ENCODE measurements at regions of chr1 and their contacts with region 1.

Region 1: DNA sequence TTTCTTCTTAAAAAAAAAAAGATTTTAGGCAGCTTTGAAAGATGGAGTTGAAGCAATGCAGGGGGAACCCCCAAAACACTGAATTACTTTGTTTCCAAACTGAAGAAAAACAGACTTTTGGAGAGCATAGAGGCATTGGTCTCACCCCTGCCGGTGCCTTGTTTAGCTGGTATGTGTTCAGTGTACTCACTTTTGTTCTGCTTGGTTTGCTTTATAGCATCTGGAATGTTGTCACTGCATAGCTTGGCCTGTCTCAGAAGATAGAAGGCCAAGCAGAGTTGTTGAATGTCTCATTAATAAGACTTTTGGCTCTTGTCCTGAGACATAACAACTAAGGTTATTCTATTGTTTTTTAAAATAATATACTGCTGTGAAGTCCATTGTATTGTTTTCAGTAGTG is 6.9 kb downstream of the THRAP3 start:
- DNase-seq: no peak
- ATAC-seq: no peak
- H3K4me3 ChIP-seq: peak overlapping the region in 1 of 5 experiments; percentile 42
- H3K4me3 Mint-ChIP-seq: peak overlapping the region; percentile 49
- H3K27ac ChIP-seq: peak overlapping the region; percentile 85 to 94
- H3K27ac Mint-ChIP-seq: peak overlapping the region; percentile 98
- H3K4me1 ChIP-seq: peaks cover 60 to 76% of the 10 kb centered on the region in 2 donors
- H3K4me1 Mint-ChIP-seq: peaks cover 63% of the 10 kb centered on the region
- H3K27me3 ChIP-seq: no peaks in the 10 kb centered on the region
- H3K27me3 Mint-ChIP-seq: no peaks in the 10 kb centered on the region
- CTCF ChIP-seq: no peak

Region 2: GRCh38 chr1:35707601-35708440 is 523.4 kb before region 1 on chr1:
- CTCF ChIA-PET with region 1: no interaction called
- POLR2A ChIA-PET with region 1: no interaction called
- intact Hi-C with region 1: no loop called
- DNase-seq: peak; percentile 30
- ATAC-seq: peak; percentile 33
- H3K4me3 ChIP-seq: peak overlapping the region in 4 of 5 experiments; percentile 13 to 46 (median 36)
- H3K4me3 Mint-ChIP-seq: peak overlapping the region; percentile 78
- H3K27ac ChIP-seq: no peak overlapping the region
- H3K27ac Mint-ChIP-seq: no peak overlapping the region
- H3K4me1 ChIP-seq: peaks cover 13 to 15% of the 10 kb centered on the region in 2 donors
- H3K4me1 Mint-ChIP-seq: peaks cover 20% of the 10 kb centered on the region
- H3K27me3 ChIP-seq: peaks cover 0 to 41% (median 22%) of the 10 kb centered on the region in 4 experiments
- H3K27me3 Mint-ChIP-seq: peaks cover 43% of the 10 kb centered on the region
- CTCF ChIP-seq: no peak

Region 3: DNA sequence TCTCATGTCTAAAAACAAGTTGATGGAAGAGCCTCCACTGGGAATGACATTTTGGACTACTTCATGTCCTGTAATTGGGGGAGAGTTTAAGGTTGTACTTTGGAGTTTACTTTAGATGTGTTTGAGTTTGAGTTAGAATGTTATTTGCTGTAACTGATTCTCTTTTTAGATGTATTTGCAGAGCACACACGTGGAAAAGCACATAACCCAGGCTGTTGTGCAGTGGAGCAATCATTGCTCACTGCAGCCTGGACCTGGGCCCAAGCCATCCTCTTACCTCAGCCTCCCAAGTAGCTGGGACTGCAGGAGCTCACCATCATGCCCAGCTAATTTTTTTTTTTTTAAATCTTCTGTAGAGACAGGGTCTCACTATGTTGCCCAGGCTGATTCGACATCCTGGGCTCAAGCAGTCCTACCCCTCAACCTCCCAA is 38.2 kb after region 1 on chr1:
- CTCF ChIA-PET with region 1: no interaction called
- POLR2A ChIA-PET with region 1: interaction called, 5 read pairs
- intact Hi-C with region 1: loop called (anchors 5 kb)
- DNase-seq: no peak
- ATAC-seq: no peak
- H3K4me3 ChIP-seq: no peak overlapping the region
- H3K4me3 Mint-ChIP-seq: no peak overlapping the region
- H3K27ac ChIP-seq: no peak overlapping the region
- H3K27ac Mint-ChIP-seq: no peak overlapping the region
- H3K4me1 ChIP-seq: no peaks in the 10 kb centered on the region
- H3K4me1 Mint-ChIP-seq: peaks cover 8% of the 10 kb centered on the region
- H3K27me3 ChIP-seq: no peaks in the 10 kb centered on the region
- H3K27me3 Mint-ChIP-seq: no peaks in the 10 kb centered on the region
- CTCF ChIP-seq: no peak

Measured in B cell (primary cell).